Posterior vena cava (tissue), 2 donors: ENCODE measurements at regions of chr1 and their contacts with region 1.

Region 1: DNA sequence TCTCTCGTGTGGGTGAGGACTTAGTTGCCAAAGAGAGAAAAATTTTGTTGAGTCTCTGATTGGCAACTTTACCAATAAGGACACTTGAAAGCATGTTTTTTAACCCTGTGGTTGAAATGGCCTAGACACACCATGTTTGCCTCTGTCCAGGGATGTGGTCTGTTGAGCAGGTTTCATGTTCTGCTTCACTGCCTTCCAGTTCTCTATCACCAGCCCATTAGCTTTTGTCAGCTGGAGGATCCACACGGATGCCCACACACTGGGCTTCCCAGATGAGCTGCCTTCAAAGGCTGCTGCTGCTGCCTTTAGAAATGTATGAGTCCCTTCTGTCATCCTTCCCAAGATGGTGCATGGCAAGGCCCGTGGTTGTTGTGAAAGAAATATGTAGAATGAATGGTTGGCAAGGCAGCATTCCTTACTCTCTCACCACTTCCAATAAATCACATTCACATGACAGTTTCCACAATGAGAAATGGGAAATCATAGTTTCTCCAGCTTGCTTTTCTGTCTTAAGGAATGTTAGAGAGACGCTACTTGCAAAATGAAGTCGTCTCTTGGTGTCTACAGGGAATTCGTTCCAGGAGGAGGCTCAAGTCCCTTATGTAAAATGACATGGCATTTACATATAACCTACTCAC is 108.2 kb upstream of the SLC35F3 start:
- DNase-seq: no peak

Region 2: GRCh38 chr1:233435622-233436021 is 360.6 kb before region 1 on chr1:
- intact Hi-C with region 1: loop called in 1 of 2 experiments (anchors 5 kb)
- DNase-seq: no peak

Region 3: DNA sequence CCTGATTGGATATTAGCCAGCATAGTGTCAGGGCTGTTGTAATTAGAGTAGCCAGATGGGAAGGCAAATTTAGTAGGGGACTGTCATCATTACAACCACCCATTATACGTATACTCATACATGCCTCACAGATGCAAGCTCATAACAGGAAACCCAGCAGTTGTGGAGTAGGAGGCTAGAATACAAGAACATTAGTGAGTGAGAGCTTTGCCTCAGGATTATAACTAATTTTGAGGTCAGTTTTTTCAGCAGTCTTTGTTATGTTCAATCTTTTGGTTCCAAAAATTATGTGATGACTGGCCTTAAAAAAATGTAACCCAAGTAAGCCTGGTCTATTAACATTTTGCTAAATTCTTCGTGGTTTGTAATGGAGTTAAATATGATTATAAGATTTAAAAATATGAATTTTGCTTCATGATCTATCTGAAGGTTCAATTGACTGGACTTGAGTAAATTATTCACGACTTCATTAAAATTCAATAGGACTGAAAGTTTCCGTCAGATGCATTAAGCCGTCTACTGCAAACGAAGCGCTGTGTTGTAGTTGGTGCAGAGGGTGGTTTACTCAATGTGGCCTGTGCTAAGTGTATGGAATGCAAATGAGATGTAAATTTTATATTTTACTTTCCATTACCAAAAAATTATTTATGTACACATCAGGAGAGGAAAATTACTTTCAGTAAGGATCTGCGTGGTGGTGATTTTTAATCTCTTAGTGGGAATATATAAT is 133.5 kb before region 1 on chr1:
- intact Hi-C with region 1: no loop called
- DNase-seq: no peak